Endothelial cell of umbilical vein (primary cell): ENCODE measurements at regions of chr13 and their contacts with region 1.

Region 1: DNA sequence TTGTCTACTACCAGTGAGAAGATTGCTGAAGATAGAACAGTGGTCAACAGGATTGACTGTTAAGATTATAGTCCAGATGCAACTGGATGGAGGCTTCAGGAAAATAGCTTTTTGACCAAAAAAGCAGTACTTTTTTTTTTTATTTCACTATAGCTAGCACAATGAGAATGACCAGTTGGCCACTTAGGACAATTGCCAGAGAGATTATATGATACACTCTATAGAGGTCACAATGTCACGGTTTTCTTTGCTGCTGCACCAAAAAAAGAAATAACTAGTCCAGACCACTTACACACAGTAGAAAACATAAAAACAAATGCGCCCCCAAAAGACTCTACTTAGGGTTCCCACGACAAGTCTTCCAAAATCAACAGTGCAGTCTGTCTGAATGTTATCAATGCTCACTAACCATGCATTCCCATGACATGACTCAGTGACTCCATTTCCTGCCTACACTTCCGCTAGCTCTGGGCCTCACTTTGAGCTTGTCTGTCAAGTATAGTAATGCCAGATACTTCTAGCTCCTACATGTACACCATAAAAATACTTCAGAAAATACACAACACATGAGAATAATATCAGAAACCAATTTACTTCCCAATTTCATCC is 209.1 kb upstream of the STARD13 start:
- DNase-seq: peak; percentile 99
- H3K4me3 ChIP-seq: peak overlapping the region in 1 of 3 experiments; percentile 26
- H3K27ac ChIP-seq: peak overlapping the region; percentile 98
- H3K4me1 ChIP-seq: peaks cover 66% of the 10 kb centered on the region
- H3K27me3 ChIP-seq: no peaks in the 10 kb centered on the region
- CTCF ChIP-seq: no peak
- POLR2A ChIP-seq: peak; percentile 71

Region 2: GRCh38 chr13:33090755-33091414 is 403.8 kb before region 1 on chr13:
- CTCF ChIA-PET with region 1: no interaction called
- POLR2A ChIA-PET with region 1: no interaction called
- dilution Hi-C with region 1: no loop called
- intact Hi-C with region 1: loop called (anchors 1 kb)
- DNase-seq: peak; percentile 83
- H3K4me3 ChIP-seq: no peak overlapping the region
- H3K27ac ChIP-seq: peak overlapping the region; percentile 53
- H3K4me1 ChIP-seq: peaks cover 42% of the 10 kb centered on the region
- H3K27me3 ChIP-seq: no peaks in the 10 kb centered on the region
- CTCF ChIP-seq: no peak
- POLR2A ChIP-seq: no peak

Region 3: GRCh38 chr13:33188093-33188882 is 306.4 kb before region 1 on chr13:
- CTCF ChIA-PET with region 1: no interaction called
- POLR2A ChIA-PET with region 1: no interaction called
- dilution Hi-C with region 1: no loop called
- intact Hi-C with region 1: loop called (anchors 1 kb)
- DNase-seq: peak; percentile 45
- H3K4me3 ChIP-seq: no peak overlapping the region
- H3K27ac ChIP-seq: peak overlapping the region; percentile 84
- H3K4me1 ChIP-seq: peaks cover 50% of the 10 kb centered on the region
- H3K27me3 ChIP-seq: no peaks in the 10 kb centered on the region
- CTCF ChIP-seq: no peak
- POLR2A ChIP-seq: no peak

Region 4: DNA sequence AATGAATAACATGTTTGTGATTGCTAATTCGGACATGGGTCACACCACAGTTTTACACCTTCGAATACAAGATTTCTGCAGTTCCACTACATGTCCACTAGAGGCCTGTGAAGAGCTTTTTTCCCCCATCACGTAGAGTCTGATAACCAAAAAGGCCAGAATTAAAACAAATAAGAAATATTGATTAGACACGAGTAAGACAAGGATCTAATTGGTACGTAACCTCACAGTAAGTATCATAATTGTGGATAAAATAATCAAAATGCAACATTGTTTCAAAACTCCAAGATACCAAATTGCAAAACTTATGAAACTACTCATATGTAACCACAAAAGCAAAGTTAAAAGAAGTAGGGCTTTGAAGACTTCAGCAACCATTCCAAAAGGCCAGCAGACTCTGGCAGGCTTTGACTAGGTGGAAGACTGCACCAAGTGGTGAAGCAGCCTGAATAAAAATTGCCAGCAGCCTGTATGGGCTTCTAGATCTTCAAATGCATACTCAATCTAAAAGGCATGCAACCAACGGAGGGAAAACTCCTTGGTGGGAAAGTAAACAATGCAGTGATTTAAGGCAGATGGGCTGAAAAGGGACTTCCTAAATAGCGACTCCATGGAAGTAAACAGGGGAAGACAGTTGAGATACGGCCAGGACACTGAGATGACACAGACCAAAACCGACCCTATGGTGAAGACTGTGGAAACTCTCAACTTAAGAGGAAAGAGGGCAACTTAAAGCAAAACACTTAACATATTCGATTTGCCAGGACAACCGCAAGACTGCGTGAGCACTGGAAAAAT is 265.9 kb before region 1 on chr13:
- CTCF ChIA-PET with region 1: interaction called, 4 read pairs
- POLR2A ChIA-PET with region 1: no interaction called
- dilution Hi-C with region 1: no loop called
- intact Hi-C with region 1: loop called (anchors 2 kb)
- DNase-seq: peak; percentile 71
- H3K4me3 ChIP-seq: no peak overlapping the region
- H3K27ac ChIP-seq: peak overlapping the region; percentile 46
- H3K4me1 ChIP-seq: peaks cover 31% of the 10 kb centered on the region
- H3K27me3 ChIP-seq: no peaks in the 10 kb centered on the region
- CTCF ChIP-seq: peak; percentile 65 to 70
- POLR2A ChIP-seq: no peak

Region 5: DNA sequence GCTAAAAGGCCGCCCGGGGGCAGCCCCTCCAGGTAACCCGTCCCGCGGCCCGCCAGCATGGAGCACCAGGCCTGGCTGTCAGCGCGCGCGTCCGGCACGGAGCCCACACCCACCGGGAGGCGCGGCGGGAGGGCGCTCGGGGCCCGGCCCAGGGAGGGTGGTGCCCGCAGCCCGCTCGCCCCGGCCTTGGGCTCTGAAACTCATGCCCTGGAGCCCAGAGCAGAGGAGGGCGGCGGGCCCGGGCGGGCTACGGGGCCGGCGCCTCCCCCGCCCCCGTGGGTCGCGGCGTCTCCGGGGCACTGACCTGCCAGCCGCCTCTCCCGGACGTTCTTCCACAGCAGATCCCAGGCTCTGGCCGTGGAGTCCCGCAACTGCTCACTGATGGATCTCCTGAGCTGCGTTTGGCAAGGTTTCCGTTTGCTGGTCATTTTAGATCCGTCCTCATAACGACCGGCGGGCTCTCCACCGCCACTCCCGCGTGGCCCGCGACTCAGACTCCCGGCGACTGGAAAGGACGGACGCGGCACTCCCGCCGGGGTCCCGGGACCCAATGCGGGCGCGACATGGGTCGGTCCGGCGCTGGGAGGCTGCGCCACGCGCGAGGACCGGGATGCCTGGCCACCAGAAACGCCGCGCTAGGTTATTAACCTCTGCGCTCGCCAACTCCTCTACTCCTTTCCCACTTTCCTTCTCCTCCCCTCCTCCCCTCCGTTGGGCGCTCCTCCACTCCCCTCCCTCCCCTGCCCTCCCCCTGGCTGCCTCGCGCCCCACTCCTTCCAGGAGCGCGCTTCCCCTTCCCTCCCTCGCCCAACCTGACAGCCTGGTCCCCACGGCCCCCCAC is 144.5 kb before region 1 on chr13:
- CTCF ChIA-PET with region 1: no interaction called
- POLR2A ChIA-PET with region 1: no interaction called
- dilution Hi-C with region 1: no loop called
- intact Hi-C with region 1: loop called (anchors 1 kb)
- DNase-seq: peak; percentile 49
- H3K4me3 ChIP-seq: peak overlapping the region; percentile 78 to 86 (median 82)
- H3K27ac ChIP-seq: peak overlapping the region; percentile 78
- H3K4me1 ChIP-seq: peaks cover 16% of the 10 kb centered on the region
- H3K27me3 ChIP-seq: no peaks in the 10 kb centered on the region
- CTCF ChIP-seq: no peak
- POLR2A ChIP-seq: no peak

Region 6: GRCh38 chr13:33723772-33724435 is 229.2 kb after region 1 on chr13:
- CTCF ChIA-PET with region 1: no interaction called
- POLR2A ChIA-PET with region 1: interaction called, 3 read pairs
- dilution Hi-C with region 1: no loop called
- intact Hi-C with region 1: loop called (anchors 5 kb)
- DNase-seq: peak; percentile 85
- H3K4me3 ChIP-seq: no peak overlapping the region
- H3K27ac ChIP-seq: no peak overlapping the region
- H3K4me1 ChIP-seq: peaks cover 10% of the 10 kb centered on the region
- H3K27me3 ChIP-seq: no peaks in the 10 kb centered on the region
- CTCF ChIP-seq: peak; percentile 62 to 70
- POLR2A ChIP-seq: no peak

Region 7: DNA sequence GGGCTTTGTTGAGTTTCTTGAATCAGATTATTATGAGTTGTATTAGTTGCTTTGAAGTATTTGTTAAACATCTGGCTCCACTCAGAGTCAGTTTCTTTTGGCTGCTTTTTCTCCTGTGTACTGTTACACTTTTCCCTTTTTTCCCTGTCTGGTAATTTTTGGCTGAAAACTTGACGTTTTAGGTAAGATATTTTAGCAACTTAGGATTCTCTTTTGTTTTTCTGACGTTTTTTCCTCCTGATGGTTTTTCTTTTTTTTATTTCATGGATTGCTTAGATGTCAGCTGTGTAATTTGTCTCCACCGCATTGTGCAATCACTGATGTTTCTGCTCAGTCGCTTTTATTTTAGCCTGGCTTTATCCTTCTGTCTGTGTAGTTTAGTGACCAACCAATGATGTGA is 343.9 kb after region 1 on chr13:
- CTCF ChIA-PET with region 1: no interaction called
- POLR2A ChIA-PET with region 1: no interaction called
- dilution Hi-C with region 1: no loop called
- intact Hi-C with region 1: no loop called
- DNase-seq: no peak
- H3K4me3 ChIP-seq: no peak overlapping the region
- H3K27ac ChIP-seq: no peak overlapping the region
- H3K4me1 ChIP-seq: no peaks in the 10 kb centered on the region
- H3K27me3 ChIP-seq: no peaks in the 10 kb centered on the region
- CTCF ChIP-seq: no peak
- POLR2A ChIP-seq: no peak